Activated naive CD4-positive, alpha-beta T cell treated with anti-CD3 and anti-CD28 coated beads for 36 hours (primary cell): ENCODE measurements at regions of chr16 and their contacts with region 1.

Region 1: GRCh38 chr16:69443927-69444631 is 19.7 kb downstream of the CYB5B start:
- DNase-seq: peak; percentile 26
- H3K4me3 Mint-ChIP-seq: peak overlapping the region; percentile 66
- H3K27ac Mint-ChIP-seq: peak overlapping the region; percentile 89
- H3K4me1 Mint-ChIP-seq: peaks cover 43% of the 10 kb centered on the region
- H3K27me3 Mint-ChIP-seq: no peaks in the 10 kb centered on the region

Region 2: DNA sequence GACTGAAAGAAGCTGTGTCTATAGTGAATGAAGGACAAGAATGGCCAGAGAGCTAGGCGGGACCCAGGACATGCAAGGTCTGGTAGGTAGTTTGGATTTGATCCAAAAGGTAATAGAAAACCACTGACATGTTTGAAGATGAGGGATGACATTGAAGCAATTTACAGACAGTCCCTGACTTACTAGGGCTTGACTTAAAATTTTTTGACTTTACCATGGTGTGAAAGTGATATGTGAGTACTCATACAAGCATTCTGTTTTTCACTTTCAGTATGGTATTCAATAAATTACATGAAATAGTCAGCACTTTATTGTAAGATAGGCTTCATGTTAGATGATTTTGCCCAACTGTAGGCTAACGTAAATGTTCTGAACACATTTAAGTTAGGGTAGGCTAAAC is 12.0 kb before region 1 on chr16:
- CTCF ChIA-PET with region 1: no interaction called
- intact Hi-C with region 1: loop called (anchors 1 kb)
- DNase-seq: no peak
- H3K4me3 Mint-ChIP-seq: no peak overlapping the region
- H3K27ac Mint-ChIP-seq: peak overlapping the region; percentile 34
- H3K4me1 Mint-ChIP-seq: peaks cover 70% of the 10 kb centered on the region
- H3K27me3 Mint-ChIP-seq: no peaks in the 10 kb centered on the region

Region 3: DNA sequence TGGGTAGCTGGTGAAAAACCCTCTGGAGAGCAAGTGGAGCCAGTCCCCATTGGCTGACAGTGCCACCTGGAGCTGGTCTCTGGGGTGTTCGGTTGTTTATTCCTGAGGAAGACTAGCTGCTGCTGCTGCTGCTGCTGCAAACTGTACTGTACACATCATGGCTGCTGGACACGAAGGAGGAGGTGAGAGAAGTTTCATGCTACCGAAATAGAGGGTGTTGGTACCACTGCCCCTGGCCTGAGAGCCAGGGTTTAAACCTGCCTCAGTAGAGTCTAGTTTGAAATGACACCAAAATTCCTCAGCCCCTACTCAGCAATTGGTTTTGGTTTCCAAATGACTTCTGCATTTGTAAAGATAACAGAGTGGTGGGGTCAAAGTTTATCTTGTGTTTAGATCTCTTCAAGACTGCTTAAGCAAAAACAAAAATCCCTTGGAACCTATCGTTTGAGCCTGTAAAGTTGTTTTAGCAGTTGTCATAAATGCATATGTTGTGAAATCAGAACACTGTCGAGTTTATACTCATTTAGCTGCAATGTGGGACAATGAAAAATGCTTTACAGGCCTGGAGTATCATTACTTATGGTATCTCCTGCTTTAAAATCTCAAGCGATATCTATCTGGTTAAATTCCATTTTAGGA is 21.1 kb after region 1 on chr16:
- CTCF ChIA-PET with region 1: no interaction called
- intact Hi-C with region 1: loop called (anchors 2 kb)
- DNase-seq: peak; percentile 28
- H3K4me3 Mint-ChIP-seq: no peak overlapping the region
- H3K27ac Mint-ChIP-seq: no peak overlapping the region
- H3K4me1 Mint-ChIP-seq: peaks cover 43% of the 10 kb centered on the region
- H3K27me3 Mint-ChIP-seq: no peaks in the 10 kb centered on the region

Region 4: GRCh38 chr16:69520800-69521602 is 76.9 kb after region 1 on chr16:
- CTCF ChIA-PET with region 1: no interaction called
- intact Hi-C with region 1: loop called (anchors 5 kb)
- DNase-seq: peak; percentile 72
- H3K4me3 Mint-ChIP-seq: no peak overlapping the region
- H3K27ac Mint-ChIP-seq: peak overlapping the region; percentile 91
- H3K4me1 Mint-ChIP-seq: peaks cover 21% of the 10 kb centered on the region
- H3K27me3 Mint-ChIP-seq: no peaks in the 10 kb centered on the region